ENCODE measurements at regions of chr17 and their contacts with region 1.

Region 1: GRCh38 chr17:44775136-44775837 is 16.5 kb downstream of the ADAM11 start:
- DNase-seq: peak; percentile 99

Region 2: DNA sequence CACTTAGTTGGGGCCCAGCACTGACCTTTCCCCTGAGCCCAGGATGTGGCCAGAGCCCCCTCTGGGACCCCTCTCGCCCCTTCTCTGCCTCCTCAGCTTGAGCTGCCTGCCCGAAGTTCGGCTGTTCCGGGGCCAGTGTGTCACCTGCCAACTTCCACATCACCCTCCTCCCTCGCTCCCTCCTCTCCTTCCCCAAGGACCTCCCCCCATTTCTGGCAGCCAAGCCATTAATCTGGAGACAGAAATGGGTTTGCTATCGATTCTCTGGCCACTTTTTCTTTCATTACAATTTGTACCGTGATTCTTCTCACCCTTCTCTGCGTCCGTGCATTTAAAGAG is 25.3 kb before region 1 on chr17:
- CTCF ChIA-PET with region 1: no interaction called
- POLR2A ChIA-PET with region 1: no interaction called
- DNase-seq: no peak

Region 3: GRCh38 chr17:44864866-44865660 is 89.8 kb after region 1 on chr17:
- CTCF ChIA-PET with region 1: interaction called, 37 read pairs
- POLR2A ChIA-PET with region 1: interaction called, 8 read pairs
- DNase-seq: peak; percentile 82

Region 4: DNA sequence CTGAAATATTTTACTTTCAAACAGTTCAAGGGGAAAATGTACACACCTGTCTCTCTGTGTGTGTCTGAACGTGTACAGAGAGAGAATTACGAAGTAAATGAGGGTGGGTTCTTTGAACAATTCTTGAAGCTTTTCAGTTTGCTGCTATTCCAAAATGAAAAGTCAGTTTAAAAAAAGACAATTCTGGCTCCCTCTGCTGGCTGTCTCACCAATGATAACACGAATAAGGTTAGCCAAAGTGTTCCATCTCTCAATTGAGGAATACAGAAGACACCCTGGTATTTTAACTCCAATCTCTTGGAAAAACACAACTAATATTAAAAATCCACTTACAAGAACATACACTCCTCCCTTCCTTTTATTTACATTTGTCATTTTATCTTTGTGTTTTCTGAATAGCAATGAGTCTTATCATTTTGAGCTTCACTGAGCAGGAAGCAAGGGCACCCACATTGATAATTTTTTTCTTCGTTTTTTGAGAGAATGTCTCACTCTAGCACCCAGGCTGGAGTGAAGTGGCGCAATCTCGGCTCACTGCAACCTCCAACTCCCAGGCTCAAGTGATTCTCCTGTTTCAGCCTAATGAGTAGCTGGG is 103.4 kb after region 1 on chr17:
- CTCF ChIA-PET with region 1: interaction called, 11 read pairs
- POLR2A ChIA-PET with region 1: interaction called, 3 read pairs
- DNase-seq: peak; percentile 51

Region 5: DNA sequence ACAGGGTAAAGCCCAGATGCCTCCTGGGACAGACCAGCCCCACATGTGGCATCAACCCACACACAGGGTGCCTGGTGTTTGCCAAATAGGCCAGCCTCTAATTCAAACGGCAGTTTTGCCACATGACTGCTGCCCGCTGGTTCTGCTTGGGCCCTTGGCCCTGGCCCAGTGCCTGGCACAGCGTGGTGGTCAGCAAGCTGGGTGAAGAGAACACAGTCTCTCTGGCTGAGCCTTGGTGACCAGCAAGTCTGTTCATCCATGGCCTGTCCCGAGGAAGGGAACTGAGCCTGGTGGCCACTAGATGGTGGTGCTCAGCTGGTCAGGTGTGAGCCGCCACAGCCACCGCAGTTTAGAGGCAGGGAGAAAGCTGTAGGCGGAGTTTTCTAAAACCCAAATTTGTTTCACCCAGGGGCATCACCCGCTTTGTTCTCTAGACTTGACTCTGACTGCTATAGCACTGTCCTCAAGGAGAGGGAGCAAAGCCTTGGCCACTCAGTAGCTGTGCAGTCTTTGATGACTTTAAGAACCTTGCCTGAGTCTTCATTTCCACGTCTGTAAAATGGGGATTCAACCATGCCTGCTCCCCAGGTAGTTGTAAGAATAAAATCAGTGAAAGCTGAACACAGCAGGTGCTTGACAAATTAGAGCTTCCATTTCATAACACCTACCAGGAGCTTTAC is 144.7 kb after region 1 on chr17:
- CTCF ChIA-PET with region 1: no interaction called
- POLR2A ChIA-PET with region 1: no interaction called
- DNase-seq: peak; percentile 84

Measured in HEK293T (cell line).